Tibial artery (tissue), 4 donors: ENCODE measurements at regions of chr7 and their contacts with region 1.

Region 1: GRCh38 chr7:66681491-66682349 is 53.0 kb downstream of the KCTD7 start:
- DNase-seq: peak; percentile 97 to 98
- H3K4me3 ChIP-seq: peak overlapping the region; percentile 83 to 93
- H3K27ac ChIP-seq: peak overlapping the region; percentile 98 to 100
- H3K4me1 ChIP-seq: peaks cover 0 to 35% (median 12%) of the 10 kb centered on the region in 4 donors
- H3K27me3 ChIP-seq: no peaks in the 10 kb centered on the region
- CTCF ChIP-seq: no peak

Region 2: GRCh38 chr7:66176914-66177313 is 504.8 kb before region 1 on chr7:
- intact Hi-C with region 1: no loop called
- DNase-seq: peak; percentile 26 to 67
- H3K4me3 ChIP-seq: no peak overlapping the region
- H3K27ac ChIP-seq: no peak overlapping the region
- H3K4me1 ChIP-seq: no peaks in the 10 kb centered on the region
- H3K27me3 ChIP-seq: no peaks in the 10 kb centered on the region
- CTCF ChIP-seq: no peak

Region 3: DNA sequence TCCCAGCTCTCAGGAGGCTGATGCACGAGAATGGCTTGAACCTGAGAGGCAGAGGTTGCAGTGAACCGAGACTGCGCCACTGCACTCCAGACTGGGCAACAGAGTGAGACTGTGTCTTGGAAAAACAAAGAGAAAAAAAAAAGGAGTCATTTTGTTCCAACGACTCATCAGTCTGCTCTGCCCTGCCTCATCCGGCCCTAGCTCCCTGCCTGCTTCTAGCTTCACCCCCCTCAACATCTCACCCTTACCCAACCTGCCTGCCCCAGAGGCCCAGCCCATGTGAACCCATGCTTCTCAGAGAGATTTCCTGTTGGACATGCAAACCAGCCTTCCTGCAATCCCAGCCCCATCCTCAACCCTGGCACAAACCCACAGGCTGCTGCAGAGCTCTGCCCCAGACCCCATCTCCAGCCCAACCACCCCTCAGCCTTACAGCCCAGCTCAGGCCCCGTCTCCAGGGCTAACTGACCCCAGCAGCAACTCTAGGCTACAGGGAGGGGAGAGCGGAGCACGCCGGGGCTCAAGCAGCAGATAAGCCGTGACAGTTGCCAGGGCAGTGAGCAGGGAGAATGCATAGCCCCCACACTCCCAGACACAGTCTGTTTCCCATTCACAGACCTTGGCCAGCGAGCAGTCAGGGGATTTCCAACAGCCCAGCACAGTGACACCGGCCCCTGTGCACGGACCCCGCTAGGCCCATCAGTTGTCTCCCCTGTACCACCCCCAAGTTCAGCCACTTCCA is 139.0 kb before region 1 on chr7:
- intact Hi-C with region 1: no loop called
- DNase-seq: no peak
- H3K4me3 ChIP-seq: no peak overlapping the region
- H3K27ac ChIP-seq: no peak overlapping the region
- H3K4me1 ChIP-seq: no peaks in the 10 kb centered on the region
- H3K27me3 ChIP-seq: no peaks in the 10 kb centered on the region
- CTCF ChIP-seq: no peak

Region 4: DNA sequence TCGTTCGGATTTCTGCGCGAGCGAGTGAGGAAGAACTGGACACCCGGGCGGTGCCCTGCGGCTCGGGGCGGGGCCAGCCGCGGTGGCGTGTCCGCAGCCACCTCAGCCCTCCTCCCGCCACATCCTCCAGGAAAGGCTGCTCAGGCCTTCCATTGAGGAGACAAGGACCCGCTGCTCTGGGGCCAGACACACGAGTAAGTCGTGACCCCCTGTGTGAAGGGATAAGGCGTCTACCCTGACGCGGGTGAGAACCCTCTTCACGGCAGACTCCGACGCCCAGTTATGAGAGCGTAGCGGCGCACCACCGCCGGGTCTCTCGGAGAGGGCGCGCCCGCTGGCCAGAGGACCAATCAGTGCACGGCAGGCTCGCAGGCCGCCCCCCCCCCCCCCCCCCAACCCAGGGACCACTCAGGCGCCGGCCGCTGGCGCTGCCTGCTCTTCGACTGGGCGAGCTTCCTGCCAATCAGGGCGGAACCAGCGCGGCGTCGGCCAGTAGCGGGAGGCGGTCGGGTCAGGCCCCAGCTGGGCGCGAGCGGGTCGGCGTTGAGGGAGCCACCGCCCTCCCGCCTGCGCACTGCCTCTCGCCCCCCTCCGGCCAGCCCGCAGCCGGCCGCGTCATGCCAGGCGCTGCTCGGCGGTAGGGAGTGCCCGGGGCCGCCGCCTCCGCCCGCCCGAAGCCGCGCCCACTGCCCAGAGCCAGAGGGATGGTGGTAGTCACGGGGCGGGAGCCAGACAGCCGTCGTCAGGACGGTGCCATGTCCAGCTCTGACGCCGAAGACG is 53.2 kb before region 1 on chr7 and contains the start of gene KCTD7:
- intact Hi-C with region 1: loop called (anchors 2 kb)
- DNase-seq: peak; percentile 97 to 100
- H3K4me3 ChIP-seq: peak within 1 kb of the TSS; percentile 64 to 77
- H3K27ac ChIP-seq: peak within 1 kb of the TSS; percentile 90 to 98
- H3K4me1 ChIP-seq: peaks cover 0 to 25% (median 13%) of the 10 kb centered on the region in 4 donors
- H3K27me3 ChIP-seq: no peaks in the 10 kb centered on the region
- CTCF ChIP-seq: peak in 1 of 2 experiments; percentile 5

Region 5: GRCh38 chr7:66654123-66654732 is 27.5 kb before region 1 on chr7:
- intact Hi-C with region 1: loop called (anchors 2 kb)
- DNase-seq: peak; percentile 98 to 99
- H3K4me3 ChIP-seq: peak overlapping the region; percentile 93 to 99
- H3K27ac ChIP-seq: peak overlapping the region; percentile 97 to 100
- H3K4me1 ChIP-seq: peaks cover 0 to 23% (median 9%) of the 10 kb centered on the region in 4 donors
- H3K27me3 ChIP-seq: no peaks in the 10 kb centered on the region
- CTCF ChIP-seq: peak; percentile 20 to 31

Region 6: GRCh38 chr7:66740302-66740979 is 58.7 kb after region 1 on chr7 and contains the start of gene RABGEF1:
- intact Hi-C with region 1: loop called (anchors 1 kb)
- DNase-seq: peak; percentile 98 to 99
- H3K4me3 ChIP-seq: peak within 1 kb of the TSS; percentile 91 to 92
- H3K27ac ChIP-seq: peak within 1 kb of the TSS; percentile 94 to 98
- H3K4me1 ChIP-seq: peaks cover 0 to 44% (median 25%) of the 10 kb centered on the region in 4 donors
- H3K27me3 ChIP-seq: no peaks in the 10 kb centered on the region
- CTCF ChIP-seq: no peak

Region 7: DNA sequence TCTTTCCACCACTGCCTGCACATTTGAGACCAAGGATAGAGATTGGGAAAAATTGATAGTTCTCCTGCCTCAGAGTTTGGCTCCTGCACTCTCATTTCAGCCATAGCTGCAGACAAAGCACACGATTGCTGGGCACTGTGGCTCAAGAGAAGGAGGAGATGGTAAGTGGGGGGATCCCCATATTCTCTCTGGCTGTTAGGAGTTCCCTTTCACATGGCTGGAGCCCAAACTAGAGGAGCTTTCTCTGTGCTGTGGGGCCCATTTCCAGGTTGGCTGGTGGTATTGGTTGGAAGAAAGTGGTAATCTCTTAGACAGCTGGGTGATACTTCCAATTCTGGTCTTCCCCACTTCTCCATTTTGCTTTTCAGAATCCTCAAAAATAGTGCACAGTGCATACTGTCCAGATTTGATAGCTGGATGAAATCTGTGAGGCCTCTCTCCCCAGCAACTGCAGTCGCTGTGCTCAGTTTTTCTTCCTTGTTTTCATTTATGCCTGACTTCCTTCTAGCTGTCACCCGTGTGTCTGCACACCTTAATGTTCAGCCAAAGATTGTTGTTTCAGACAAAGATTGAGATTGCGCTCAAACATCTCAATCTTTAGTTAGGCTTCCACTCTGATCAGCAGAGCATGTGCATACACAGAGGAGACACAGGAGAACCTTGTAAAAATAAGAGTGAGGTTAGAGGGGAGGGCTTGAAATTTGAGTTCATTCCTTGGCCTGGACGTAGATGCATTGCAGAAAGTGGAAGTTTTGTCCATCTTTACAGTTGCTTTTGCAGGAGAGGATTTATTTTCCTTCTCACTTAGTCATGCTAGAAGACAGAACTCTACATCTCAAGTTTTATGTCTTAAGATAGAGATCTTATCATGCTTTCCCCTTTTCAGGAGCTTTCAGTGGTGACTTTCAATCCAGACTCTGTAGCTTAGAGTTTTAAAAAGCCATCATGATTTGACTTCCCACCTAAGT is 87.4 kb after region 1 on chr7:
- intact Hi-C with region 1: loop called (anchors 10 kb)
- DNase-seq: no peak
- H3K4me3 ChIP-seq: no peak overlapping the region
- H3K27ac ChIP-seq: no peak overlapping the region
- H3K4me1 ChIP-seq: peaks cover 0 to 13% (median 3%) of the 10 kb centered on the region in 4 donors
- H3K27me3 ChIP-seq: no peaks in the 10 kb centered on the region
- CTCF ChIP-seq: no peak

Region 8: DNA sequence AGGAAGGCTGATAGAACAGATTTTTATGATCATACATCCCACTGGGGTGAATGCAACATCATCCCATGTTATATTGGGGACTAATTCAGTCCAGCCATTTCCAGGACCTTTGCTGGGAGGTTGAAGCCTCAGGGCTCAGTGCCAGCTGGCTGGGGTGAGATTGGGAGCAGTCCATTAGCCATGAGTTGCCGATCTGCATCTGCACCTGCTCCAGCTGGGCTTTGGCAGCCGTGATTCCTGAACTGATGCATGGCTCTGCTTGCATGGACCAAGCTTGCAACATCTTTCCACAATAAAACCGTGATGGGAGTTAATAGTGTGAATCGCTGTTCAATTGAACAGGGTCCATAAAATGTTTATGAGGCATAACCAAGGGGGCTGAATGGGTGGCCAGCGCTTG is 661.9 kb after region 1 on chr7:
- intact Hi-C with region 1: no loop called
- DNase-seq: no peak
- H3K4me3 ChIP-seq: no peak overlapping the region
- H3K27ac ChIP-seq: no peak overlapping the region
- H3K4me1 ChIP-seq: no peaks in the 10 kb centered on the region
- H3K27me3 ChIP-seq: no peaks in the 10 kb centered on the region
- CTCF ChIP-seq: no peak